ENCODE measurements at regions of chr1 and their contacts with region 1.

Region 1: GRCh38 chr1:15152318-15153183 is 996 bp upstream of the TMEM51 start:
- DNase-seq: peak; percentile 89
- H3K4me3 ChIP-seq: peak overlapping the region; percentile 71 to 83 (median 75)
- H3K27ac ChIP-seq: peak overlapping the region; percentile 81
- H3K4me1 ChIP-seq: peaks cover 18% of the 10 kb centered on the region
- H3K27me3 ChIP-seq: no peaks in the 10 kb centered on the region
- CTCF ChIP-seq: peak; percentile 52 to 82

Region 2: GRCh38 chr1:15090373-15090772 is 62.2 kb before region 1 on chr1:
- CTCF ChIA-PET with region 1: no interaction called
- dilution Hi-C with region 1: no loop called
- in situ Hi-C with region 1: no loop called
- intact Hi-C with region 1: no loop called
- DNase-seq: peak; percentile 30
- H3K4me3 ChIP-seq: no peak overlapping the region
- H3K27ac ChIP-seq: no peak overlapping the region
- H3K4me1 ChIP-seq: peaks cover 15% of the 10 kb centered on the region
- H3K27me3 ChIP-seq: no peaks in the 10 kb centered on the region
- CTCF ChIP-seq: no peak

Region 3: DNA sequence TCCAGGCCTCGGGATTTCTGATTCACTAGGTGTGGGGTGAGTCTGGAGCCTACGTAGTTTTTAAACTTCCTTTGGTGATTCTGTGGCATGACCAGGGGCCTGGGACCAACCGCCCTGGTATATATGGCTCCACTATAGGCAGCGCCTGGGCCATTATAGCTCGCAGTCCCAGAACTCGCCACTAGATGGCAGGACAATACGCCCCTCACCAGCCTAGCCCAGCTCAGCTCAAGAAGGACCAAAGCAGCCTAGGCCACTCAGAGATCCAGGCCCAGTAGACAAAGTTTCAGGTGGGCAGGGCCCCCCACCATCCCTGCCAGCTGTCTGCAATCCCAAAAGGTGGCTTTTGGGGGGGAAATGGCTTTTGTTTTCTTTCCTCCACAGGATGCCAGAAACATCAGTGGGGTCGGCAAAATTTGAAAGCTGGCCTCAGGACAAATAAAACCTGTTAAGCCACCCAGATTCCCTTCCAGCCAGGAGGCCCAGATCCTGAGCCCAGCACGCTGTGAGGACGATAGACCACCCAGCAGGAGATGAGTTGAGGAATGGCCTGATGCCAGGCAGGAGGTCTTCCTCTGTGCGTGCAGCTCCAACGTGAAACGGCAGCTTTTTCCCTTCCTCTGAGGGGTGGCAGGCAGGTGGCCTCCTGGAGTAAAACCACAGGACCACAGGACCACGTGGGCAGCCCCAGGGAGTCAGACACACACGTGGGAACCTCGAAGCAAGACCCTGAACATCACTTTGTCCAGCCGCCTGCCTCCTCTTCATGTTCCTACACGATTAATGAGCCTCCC is 23.8 kb before region 1 on chr1:
- CTCF ChIA-PET with region 1: no interaction called
- dilution Hi-C with region 1: no loop called
- in situ Hi-C with region 1: no loop called
- intact Hi-C with region 1: loop called (anchors 1 kb)
- DNase-seq: peak; percentile 53
- H3K4me3 ChIP-seq: no peak overlapping the region
- H3K27ac ChIP-seq: no peak overlapping the region
- H3K4me1 ChIP-seq: no peaks in the 10 kb centered on the region
- H3K27me3 ChIP-seq: no peaks in the 10 kb centered on the region
- CTCF ChIP-seq: peak; percentile 87 to 92

Region 4: DNA sequence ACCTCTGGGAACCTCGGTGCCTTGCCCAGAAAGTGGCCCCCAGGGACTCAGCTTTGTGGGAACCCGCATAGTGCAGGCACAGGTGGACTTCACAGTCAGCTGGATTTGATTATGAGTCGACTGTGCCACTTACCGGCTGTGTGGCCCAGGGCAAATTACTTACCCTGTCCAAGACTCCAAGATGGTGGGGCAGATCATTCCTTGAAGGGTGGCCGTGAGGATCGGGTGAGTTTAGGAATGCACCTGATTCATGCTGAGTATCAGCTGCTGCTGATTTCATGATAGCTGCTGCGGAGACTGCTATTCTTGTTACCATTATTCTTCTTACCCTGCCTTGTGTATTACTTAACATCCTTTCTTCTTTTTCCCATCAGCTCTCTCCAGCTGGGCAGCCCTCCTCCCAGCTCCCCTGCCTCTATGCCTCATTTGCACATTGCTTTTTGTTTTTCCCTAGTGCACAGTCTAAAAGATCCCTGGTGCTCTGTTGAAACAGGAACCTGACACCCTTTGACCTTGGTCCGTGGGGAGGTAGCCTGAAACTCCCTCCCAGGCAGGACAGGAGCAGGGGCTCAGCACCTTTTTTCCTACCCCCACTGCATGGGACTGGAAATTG is 54.0 kb after region 1 on chr1:
- CTCF ChIA-PET with region 1: interaction called, 4 read pairs
- dilution Hi-C with region 1: no loop called
- in situ Hi-C with region 1: no loop called
- intact Hi-C with region 1: loop called (anchors 1 kb)
- DNase-seq: peak; percentile 92
- H3K4me3 ChIP-seq: no peak overlapping the region
- H3K27ac ChIP-seq: no peak overlapping the region
- H3K4me1 ChIP-seq: peaks cover 11% of the 10 kb centered on the region
- H3K27me3 ChIP-seq: no peaks in the 10 kb centered on the region
- CTCF ChIP-seq: no peak

Region 5: GRCh38 chr1:15304701-15305467 is 152.3 kb after region 1 on chr1:
- CTCF ChIA-PET with region 1: no interaction called
- dilution Hi-C with region 1: no loop called
- in situ Hi-C with region 1: loop called in 1 of 2 experiments (anchors 10 kb)
- intact Hi-C with region 1: loop called (anchors 1 kb)
- DNase-seq: peak; percentile 52
- H3K4me3 ChIP-seq: no peak overlapping the region
- H3K27ac ChIP-seq: no peak overlapping the region
- H3K4me1 ChIP-seq: peaks cover 7% of the 10 kb centered on the region
- H3K27me3 ChIP-seq: no peaks in the 10 kb centered on the region
- CTCF ChIP-seq: peak; percentile 85 to 91

Region 6: GRCh38 chr1:15430787-15431570 is 278.4 kb after region 1 on chr1:
- CTCF ChIA-PET with region 1: no interaction called
- dilution Hi-C with region 1: no loop called
- in situ Hi-C with region 1: loop called in 1 of 2 experiments (anchors 25 kb)
- intact Hi-C with region 1: loop called (anchors 2 kb)
- DNase-seq: no peak
- H3K4me3 ChIP-seq: no peak overlapping the region
- H3K27ac ChIP-seq: no peak overlapping the region
- H3K4me1 ChIP-seq: peaks cover 15% of the 10 kb centered on the region
- H3K27me3 ChIP-seq: no peaks in the 10 kb centered on the region
- CTCF ChIP-seq: peak; percentile 94 to 95